CD4-positive, alpha-beta memory T cell (primary cell): ENCODE measurements at regions of chr17 and their contacts with region 1.

Region 1: GRCh38 chr17:64975329-64976087 is 56.2 kb upstream of the LRRC37A3 start:
- DNase-seq: peak; percentile 97 to 99 (median 98)
- H3K4me3 ChIP-seq: peak overlapping the region; percentile 29 to 83
- H3K4me3 Mint-ChIP-seq: peak overlapping the region; percentile 91 to 99 (median 94)
- H3K27ac ChIP-seq: peak overlapping the region; percentile 93
- H3K27ac Mint-ChIP-seq: peak overlapping the region; percentile 98 to 100 (median 99)
- H3K4me1 ChIP-seq: peaks cover 38% of the 10 kb centered on the region
- H3K4me1 Mint-ChIP-seq: peaks cover 28 to 65% (median 39%) of the 10 kb centered on the region in 4 donors
- H3K27me3 ChIP-seq: no peaks in the 10 kb centered on the region
- H3K27me3 Mint-ChIP-seq: no peaks in the 10 kb centered on the region

Region 2: GRCh38 chr17:65013613-65014391 is 38.3 kb after region 1 on chr17:
- CTCF ChIA-PET with region 1: interaction called, 3 read pairs
- POLR2A ChIA-PET with region 1: interaction called, 13 read pairs
- intact Hi-C with region 1: no loop called
- DNase-seq: peak; percentile 20 to 74 (median 35)
- H3K4me3 ChIP-seq: no peak overlapping the region
- H3K4me3 Mint-ChIP-seq: peak overlapping the region in 6 of 8 donors; percentile 2 to 52 (median 26)
- H3K27ac ChIP-seq: no peak overlapping the region
- H3K27ac Mint-ChIP-seq: peak overlapping the region; percentile 26 to 91 (median 89)
- H3K4me1 ChIP-seq: peaks cover 43% of the 10 kb centered on the region
- H3K4me1 Mint-ChIP-seq: peaks cover 55 to 91% (median 68%) of the 10 kb centered on the region in 4 donors
- H3K27me3 ChIP-seq: no peaks in the 10 kb centered on the region
- H3K27me3 Mint-ChIP-seq: no peaks in the 10 kb centered on the region

Region 3: GRCh38 chr17:65039336-65039988 is 64.0 kb after region 1 on chr17:
- CTCF ChIA-PET with region 1: interaction called, 3 read pairs
- POLR2A ChIA-PET with region 1: interaction called, 35 read pairs
- intact Hi-C with region 1: no loop called
- DNase-seq: peak; percentile 78 to 89 (median 85)
- H3K4me3 ChIP-seq: peak overlapping the region; percentile 29 to 57
- H3K4me3 Mint-ChIP-seq: peak overlapping the region; percentile 74 to 92 (median 78)
- H3K27ac ChIP-seq: peak overlapping the region; percentile 87
- H3K27ac Mint-ChIP-seq: peak overlapping the region; percentile 82 to 99 (median 97)
- H3K4me1 ChIP-seq: peaks cover 98% of the 10 kb centered on the region
- H3K4me1 Mint-ChIP-seq: peaks cover 66 to 91% (median 77%) of the 10 kb centered on the region in 4 donors
- H3K27me3 ChIP-seq: no peaks in the 10 kb centered on the region
- H3K27me3 Mint-ChIP-seq: no peaks in the 10 kb centered on the region

Region 4: DNA sequence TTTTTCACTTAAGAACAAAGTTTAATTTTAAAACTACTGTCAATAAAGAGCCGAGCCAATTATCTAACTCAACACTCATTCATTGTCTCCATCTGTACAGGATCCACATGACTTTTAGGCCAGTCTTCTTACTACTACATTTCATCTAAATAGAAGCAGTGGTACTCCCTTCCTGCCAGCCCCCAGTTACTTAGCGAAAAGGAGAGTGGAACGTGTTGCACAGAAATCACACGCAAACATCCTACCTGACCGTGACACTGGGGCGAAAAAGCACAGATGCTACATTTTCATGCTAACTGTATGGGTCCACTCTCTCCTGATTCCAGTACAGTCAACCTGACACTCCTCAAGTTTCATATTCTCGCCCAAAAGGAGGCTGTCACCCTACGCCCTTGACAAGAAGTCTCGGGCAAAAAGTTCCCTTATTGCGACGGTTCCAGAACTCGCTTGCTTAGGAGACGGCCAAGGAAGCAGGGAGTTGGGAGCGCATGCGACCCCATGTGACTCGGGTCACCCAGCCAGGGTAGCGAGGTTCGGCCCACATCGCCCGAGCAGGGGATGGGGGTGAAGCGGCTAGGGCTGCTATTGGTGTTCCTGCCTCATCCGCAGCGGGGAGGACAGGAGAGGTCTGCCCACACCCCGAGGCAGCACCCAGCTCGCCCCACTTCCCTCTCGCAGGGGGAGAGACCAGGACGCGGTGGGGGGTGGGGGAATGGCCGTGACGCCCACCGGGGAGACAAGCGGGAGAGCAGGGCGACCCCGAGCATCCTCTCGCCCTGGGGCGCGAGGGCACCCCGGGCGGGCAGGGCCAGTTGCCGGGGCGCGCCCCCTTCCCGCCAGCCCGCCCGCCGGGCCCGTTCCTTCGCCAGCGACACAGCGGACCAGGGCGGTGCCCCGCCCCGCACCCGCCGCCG is 80.1 kb after region 1 on chr17:
- CTCF ChIA-PET with region 1: interaction called, 6 read pairs
- POLR2A ChIA-PET with region 1: interaction called, 68 read pairs
- intact Hi-C with region 1: loop called (anchors 1 kb)
- DNase-seq: peak; percentile 37 to 63 (median 43)
- H3K4me3 ChIP-seq: peak overlapping the region; percentile 91 to 94
- H3K4me3 Mint-ChIP-seq: peak overlapping the region; percentile 91 to 100 (median 98)
- H3K27ac ChIP-seq: peak overlapping the region; percentile 96
- H3K27ac Mint-ChIP-seq: peak overlapping the region; percentile 96 to 99 (median 98)
- H3K4me1 ChIP-seq: peaks cover 48% of the 10 kb centered on the region
- H3K4me1 Mint-ChIP-seq: peaks cover 32 to 65% (median 47%) of the 10 kb centered on the region in 4 donors
- H3K27me3 ChIP-seq: no peaks in the 10 kb centered on the region
- H3K27me3 Mint-ChIP-seq: no peaks in the 10 kb centered on the region